Heart right ventricle (tissue), 16 donors: ENCODE measurements at regions of chr10 and their contacts with region 1.

Region 1: DNA sequence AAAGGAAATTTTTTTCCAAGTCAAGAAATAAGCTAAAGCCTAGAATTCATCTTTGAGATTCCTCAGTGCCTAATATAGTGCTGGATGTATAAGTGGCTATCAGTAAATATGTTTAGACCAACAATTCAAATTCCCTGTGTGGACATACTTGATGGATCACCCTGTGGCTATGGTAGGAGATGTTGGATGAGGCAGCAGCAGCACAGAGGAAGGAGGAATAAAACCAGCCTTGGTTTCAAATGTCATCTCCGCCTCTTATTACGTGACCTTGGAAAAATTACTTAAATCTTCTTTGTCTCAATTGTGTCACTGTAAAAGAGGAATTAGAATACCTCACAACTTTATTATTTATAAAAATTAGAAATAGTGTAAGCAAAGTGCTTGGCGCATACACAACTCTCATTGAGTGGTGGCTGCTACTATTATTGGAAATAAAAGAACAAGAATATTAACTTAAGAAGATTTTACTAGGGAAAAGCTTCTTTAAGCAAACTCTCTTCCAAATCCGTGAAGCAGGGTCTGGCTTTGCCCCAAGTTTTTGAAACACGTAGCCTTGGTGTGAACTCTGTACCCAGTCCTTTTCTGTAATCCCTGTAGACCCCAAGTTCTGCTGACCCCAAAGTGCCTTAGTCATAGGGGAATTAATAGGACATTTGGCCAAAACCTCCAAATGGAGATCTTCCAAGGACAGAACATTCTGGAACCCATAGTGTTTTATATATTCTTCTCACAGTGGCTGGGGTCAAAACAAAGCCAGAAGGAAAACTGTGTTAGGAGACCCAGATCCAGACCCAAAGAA is 283.8 kb downstream of the PTEN start:
- DNase-seq: peak in 1 of 2 donors; percentile 65
- ATAC-seq: peak; percentile 80 to 94 (median 87)
- H3K4me3 ChIP-seq: no peak overlapping the region
- H3K27ac ChIP-seq: peak overlapping the region; percentile 36 to 70 (median 50)
- H3K4me1 ChIP-seq: peaks cover 0 to 11% (median 0%) of the 10 kb centered on the region in 9 donors
- H3K27me3 ChIP-seq: no peaks in the 10 kb centered on the region
- CTCF ChIP-seq: no peak

Region 2: GRCh38 chr10:87976101-87976743 is 171.0 kb before region 1 on chr10:
- intact Hi-C with region 1: no loop called
- DNase-seq: no peak
- ATAC-seq: no peak
- H3K4me3 ChIP-seq: no peak overlapping the region
- H3K27ac ChIP-seq: no peak overlapping the region
- H3K4me1 ChIP-seq: peaks cover 0 to 8% (median 0%) of the 10 kb centered on the region in 9 donors
- H3K27me3 ChIP-seq: no peaks in the 10 kb centered on the region
- CTCF ChIP-seq: no peak

Region 3: GRCh38 chr10:88254091-88254490 is 106.9 kb after region 1 on chr10:
- intact Hi-C with region 1: loop called in 3 of 10 experiments (anchors 2 to 10 kb)
- DNase-seq: no peak
- ATAC-seq: peak in 1 of 8 donors; percentile 72
- H3K4me3 ChIP-seq: no peak overlapping the region
- H3K27ac ChIP-seq: peak overlapping the region in 3 of 10 donors; percentile 2 to 87 (median 26)
- H3K4me1 ChIP-seq: peaks cover 0 to 31% (median 3%) of the 10 kb centered on the region in 9 donors
- H3K27me3 ChIP-seq: no peaks in the 10 kb centered on the region
- CTCF ChIP-seq: no peak

Region 4: DNA sequence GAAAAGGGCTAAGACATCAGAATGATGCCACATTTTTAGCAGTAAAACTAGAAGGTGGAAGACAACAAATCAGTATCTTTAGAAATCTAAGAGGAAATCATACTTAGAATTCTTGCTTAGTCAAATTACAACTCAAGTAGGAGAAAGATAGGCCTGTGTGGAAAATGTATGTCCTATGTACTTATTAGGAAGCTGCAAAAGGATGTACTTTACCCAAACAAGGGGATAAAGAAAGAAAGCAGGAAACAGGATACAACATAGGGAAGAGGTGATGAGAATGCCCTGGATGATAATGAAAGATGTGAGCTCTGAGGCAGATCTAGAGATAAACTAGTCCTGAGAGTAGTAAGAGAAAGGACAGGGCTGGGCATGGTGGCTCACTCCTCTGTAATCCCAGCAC is 381.0 kb after region 1 on chr10:
- intact Hi-C with region 1: no loop called
- DNase-seq: no peak
- ATAC-seq: no peak
- H3K4me3 ChIP-seq: no peak overlapping the region
- H3K27ac ChIP-seq: no peak overlapping the region
- H3K4me1 ChIP-seq: peaks cover 0 to 11% (median 0%) of the 10 kb centered on the region in 9 donors
- H3K27me3 ChIP-seq: no peaks in the 10 kb centered on the region
- CTCF ChIP-seq: no peak

Region 5: GRCh38 chr10:89134963-89135362 is 987.8 kb after region 1 on chr10:
- intact Hi-C with region 1: no loop called
- DNase-seq: no peak
- ATAC-seq: no peak
- H3K4me3 ChIP-seq: no peak overlapping the region
- H3K27ac ChIP-seq: no peak overlapping the region
- H3K4me1 ChIP-seq: no peaks in the 10 kb centered on the region
- H3K27me3 ChIP-seq: no peaks in the 10 kb centered on the region
- CTCF ChIP-seq: no peak

Region 6: DNA sequence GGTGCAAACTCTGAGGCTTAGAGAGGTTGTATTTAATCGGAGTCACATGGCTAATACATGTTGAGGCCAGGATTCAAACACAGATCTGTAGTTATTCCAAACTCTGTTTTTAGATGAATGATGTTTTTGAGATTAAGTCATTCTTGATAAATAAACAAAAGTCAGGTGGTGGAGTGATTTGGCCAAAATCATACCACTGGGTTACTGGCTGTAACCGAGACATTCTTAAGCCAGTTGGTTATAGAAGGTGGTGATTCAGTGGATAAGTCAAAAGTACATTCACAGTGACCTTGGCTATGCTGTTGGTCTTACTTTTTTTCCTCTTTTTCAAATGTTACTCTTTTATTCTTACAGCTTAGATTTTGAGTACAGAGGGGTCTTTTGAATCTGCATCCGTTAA is 1915.6 kb after region 1 on chr10:
- intact Hi-C with region 1: no loop called
- DNase-seq: no peak
- ATAC-seq: no peak
- H3K4me3 ChIP-seq: no peak overlapping the region
- H3K27ac ChIP-seq: no peak overlapping the region
- H3K4me1 ChIP-seq: no peaks in the 10 kb centered on the region
- H3K27me3 ChIP-seq: no peaks in the 10 kb centered on the region
- CTCF ChIP-seq: no peak